Activated CD4-positive, alpha-beta memory T cell treated with anti-CD3 and anti-CD28 coated beads for 36 hours (primary cell): ENCODE measurements at regions of chr21 and their contacts with region 1.

Region 1: DNA sequence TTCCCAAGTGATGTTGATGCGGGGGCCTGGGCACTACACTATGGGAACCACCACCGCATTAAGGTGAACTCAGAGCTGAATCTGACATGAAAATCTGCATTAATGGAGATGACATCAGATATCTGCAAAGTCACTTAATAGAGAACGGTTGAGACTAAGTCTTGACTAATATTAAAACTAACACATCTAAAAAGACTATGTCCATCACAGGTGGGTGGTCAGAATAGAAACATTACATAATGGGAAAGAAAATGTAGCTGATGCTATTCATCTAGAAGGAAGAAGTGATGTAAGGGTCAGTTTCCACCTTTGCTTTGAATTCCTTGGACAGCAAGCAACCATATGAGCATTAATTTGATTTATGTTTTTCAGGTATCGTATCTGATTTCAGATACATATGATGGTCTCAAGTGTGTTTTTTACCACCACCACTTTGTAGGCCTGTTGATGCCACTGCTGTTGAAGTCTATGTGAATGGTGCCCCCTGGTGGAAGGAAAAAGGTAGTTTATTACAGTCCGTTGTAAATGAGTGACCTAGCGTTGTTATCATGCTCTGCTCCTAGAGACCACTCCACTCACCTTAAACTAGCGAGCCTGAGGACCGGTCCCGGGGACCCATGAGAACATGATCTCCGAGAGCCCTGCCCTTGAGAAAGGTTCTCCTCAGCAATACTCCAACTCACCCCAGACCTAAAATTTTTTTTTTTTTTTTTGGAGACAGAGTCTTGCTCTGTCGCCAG is 73.5 kb downstream of the BACH1 start:
- DNase-seq: peak; percentile 48
- H3K4me3 Mint-ChIP-seq: no peak overlapping the region
- H3K27ac Mint-ChIP-seq: peak overlapping the region; percentile 64
- H3K4me1 Mint-ChIP-seq: peaks cover 23% of the 10 kb centered on the region
- H3K27me3 Mint-ChIP-seq: no peaks in the 10 kb centered on the region

Region 2: DNA sequence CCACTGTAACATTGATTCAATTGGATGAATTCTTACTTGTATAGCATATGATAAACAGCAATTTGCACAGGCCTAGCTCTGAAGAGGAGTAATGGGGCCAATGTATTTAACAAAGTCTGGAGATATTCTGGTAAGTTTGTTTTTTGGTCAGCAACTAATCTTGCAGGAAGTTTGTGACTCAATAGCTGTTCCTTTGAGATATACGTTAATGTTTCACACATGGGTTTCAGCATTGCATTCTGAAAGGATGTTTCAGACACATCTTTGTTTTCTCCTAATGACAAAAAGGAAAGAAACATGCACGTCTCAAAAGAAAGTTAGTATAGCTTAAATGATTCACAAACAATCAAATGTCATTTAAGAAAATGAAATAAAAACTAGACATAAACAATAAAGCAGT is 428.6 kb before region 1 on chr21:
- CTCF ChIA-PET with region 1: no interaction called
- POLR2A ChIA-PET with region 1: no interaction called
- intact Hi-C with region 1: no loop called
- DNase-seq: no peak
- H3K4me3 Mint-ChIP-seq: no peak overlapping the region
- H3K27ac Mint-ChIP-seq: peak overlapping the region; percentile 28
- H3K4me1 Mint-ChIP-seq: peaks cover 7% of the 10 kb centered on the region
- H3K27me3 Mint-ChIP-seq: no peaks in the 10 kb centered on the region

Region 3: GRCh38 chr21:29007805-29008204 is 364.4 kb before region 1 on chr21:
- CTCF ChIA-PET with region 1: no interaction called
- POLR2A ChIA-PET with region 1: no interaction called
- intact Hi-C with region 1: no loop called
- DNase-seq: no peak
- H3K4me3 Mint-ChIP-seq: no peak overlapping the region
- H3K27ac Mint-ChIP-seq: no peak overlapping the region
- H3K4me1 Mint-ChIP-seq: peaks cover 6% of the 10 kb centered on the region
- H3K27me3 Mint-ChIP-seq: no peaks in the 10 kb centered on the region

Region 4: DNA sequence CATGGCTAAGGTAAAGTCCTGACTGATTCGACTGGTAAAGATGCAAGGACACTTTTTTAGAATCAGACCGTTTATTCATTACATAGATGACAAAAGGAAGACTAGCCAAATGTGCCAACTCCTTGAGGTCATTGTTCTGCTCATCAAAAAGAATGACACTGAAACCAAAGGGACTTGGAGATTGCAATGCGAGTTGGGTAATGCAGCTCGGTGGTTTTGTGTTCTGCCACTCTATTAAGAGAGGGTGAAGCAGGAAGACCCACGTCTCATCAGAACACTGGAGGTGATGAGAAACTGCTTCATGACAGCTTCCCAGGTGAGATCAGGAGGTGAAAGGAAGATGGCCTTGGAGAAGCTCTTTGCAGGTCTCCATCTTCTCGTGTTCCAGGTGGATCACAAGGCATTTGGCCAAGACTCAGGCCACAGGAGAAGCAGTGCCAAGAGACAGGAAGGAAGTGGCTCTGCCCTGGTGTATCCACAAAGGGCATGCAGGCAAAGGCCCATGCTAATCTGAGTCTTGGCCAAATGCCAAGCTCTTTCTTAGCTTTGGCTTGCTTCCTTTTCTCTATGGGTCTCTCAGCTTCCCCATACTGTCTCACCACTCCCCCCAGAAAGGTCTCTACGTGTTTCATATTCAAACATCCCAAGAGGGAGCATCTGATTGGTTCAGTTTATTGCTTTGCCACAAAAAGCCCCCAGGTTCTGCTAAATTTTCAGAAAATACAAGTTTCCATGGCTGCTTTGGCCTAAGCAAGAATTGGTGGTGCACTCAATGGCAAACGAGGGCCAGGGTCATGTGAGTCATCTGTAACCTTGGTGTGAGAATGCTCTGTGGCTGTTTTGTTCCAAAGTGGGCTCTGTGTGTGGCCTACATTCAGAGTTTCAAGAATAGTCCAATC is 293.1 kb before region 1 on chr21:
- CTCF ChIA-PET with region 1: interaction called, 11 read pairs
- POLR2A ChIA-PET with region 1: interaction called, 3 read pairs
- intact Hi-C with region 1: loop called (anchors 5 kb)
- DNase-seq: peak; percentile 66
- H3K4me3 Mint-ChIP-seq: peak overlapping the region; percentile 84
- H3K27ac Mint-ChIP-seq: peak overlapping the region; percentile 81
- H3K4me1 Mint-ChIP-seq: peaks cover 58% of the 10 kb centered on the region
- H3K27me3 Mint-ChIP-seq: no peaks in the 10 kb centered on the region

Region 5: DNA sequence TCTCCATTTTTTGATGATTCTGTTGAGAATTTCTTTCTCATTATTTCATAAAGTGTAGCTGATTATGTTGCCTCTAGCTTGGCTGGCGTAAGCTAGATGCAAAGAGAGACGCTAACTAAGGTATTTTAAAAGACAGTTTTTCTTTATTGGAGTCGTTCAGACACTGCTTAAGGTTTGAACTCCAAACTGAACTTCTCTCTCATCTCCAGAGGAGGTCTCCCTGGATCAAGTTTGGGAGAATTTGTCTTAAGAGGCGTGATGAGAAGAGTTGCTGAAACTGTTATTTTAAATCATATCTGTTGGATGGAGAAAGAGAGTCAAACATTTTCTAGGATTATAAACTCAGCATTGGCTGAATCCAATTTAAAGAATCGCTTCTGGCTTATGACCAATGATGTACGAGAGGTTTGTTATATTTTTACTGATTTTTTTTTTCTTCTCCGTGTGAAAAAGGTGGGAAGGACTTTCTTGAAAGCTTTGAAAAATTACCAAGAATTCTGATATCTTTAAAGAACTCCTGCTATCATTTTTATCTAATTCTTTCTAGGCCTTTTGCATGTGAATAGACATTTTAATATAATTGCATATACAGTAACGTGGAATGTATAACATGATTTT is 207.8 kb before region 1 on chr21:
- CTCF ChIA-PET with region 1: interaction called, 31 read pairs
- POLR2A ChIA-PET with region 1: no interaction called
- intact Hi-C with region 1: loop called (anchors 1 kb)
- DNase-seq: no peak
- H3K4me3 Mint-ChIP-seq: no peak overlapping the region
- H3K27ac Mint-ChIP-seq: no peak overlapping the region
- H3K4me1 Mint-ChIP-seq: peaks cover 4% of the 10 kb centered on the region
- H3K27me3 Mint-ChIP-seq: no peaks in the 10 kb centered on the region

Region 6: GRCh38 chr21:29245104-29245643 is 127.1 kb before region 1 on chr21:
- CTCF ChIA-PET with region 1: interaction called, 7 read pairs
- POLR2A ChIA-PET with region 1: interaction called, 6 read pairs
- intact Hi-C with region 1: loop called (anchors 1 kb)
- DNase-seq: peak; percentile 65
- H3K4me3 Mint-ChIP-seq: no peak overlapping the region
- H3K27ac Mint-ChIP-seq: no peak overlapping the region
- H3K4me1 Mint-ChIP-seq: peaks cover 12% of the 10 kb centered on the region
- H3K27me3 Mint-ChIP-seq: peaks cover 12% of the 10 kb centered on the region

Region 7: GRCh38 chr21:29349702-29350101 is 22.5 kb before region 1 on chr21:
- CTCF ChIA-PET with region 1: interaction called, 35 read pairs
- POLR2A ChIA-PET with region 1: interaction called, 4 read pairs
- intact Hi-C with region 1: loop called (anchors 1 kb)
- DNase-seq: no peak
- H3K4me3 Mint-ChIP-seq: no peak overlapping the region
- H3K27ac Mint-ChIP-seq: no peak overlapping the region
- H3K4me1 Mint-ChIP-seq: peaks cover 17% of the 10 kb centered on the region
- H3K27me3 Mint-ChIP-seq: no peaks in the 10 kb centered on the region